Left colon (tissue), 2 donors: ENCODE measurements at regions of chr2 and their contacts with region 1.

Region 1: DNA sequence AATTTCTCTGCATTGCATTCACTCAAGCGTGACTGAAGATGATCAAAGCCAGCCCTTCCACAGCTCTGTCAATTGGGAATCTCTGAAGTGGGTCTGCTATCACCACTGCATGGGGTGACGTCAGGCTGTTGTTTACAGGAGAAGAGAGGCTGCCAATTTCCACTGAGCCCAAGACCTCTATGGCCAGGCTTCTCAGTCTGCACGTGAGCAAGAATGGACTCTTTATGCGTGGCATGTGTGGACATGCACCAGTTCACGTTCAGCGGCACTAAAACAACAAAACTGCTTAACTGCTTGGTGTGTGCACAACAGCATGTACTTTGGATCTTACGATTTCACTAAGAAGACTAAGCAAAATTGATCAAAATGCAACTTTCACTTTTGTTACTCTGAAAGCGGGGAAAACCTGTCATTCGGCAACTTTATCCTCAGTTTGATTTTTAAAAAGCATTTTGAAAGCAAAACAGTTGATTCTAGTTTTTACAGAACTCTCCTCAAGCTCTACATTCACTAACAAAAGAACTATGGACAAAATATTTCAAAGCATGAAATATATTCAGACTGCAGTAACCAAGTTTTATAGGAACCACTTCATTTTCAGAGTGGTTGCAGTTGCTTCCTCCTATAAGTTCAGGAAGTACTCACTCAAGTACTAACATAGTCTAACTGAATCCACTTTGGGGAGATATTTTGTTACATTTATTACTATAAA is 77.0 kb upstream of the SERTAD2 start:
- DNase-seq: peak; percentile 66 to 76
- ATAC-seq: peak; percentile 69

Region 2: GRCh38 chr2:63780483-63781155 is 950.1 kb before region 1 on chr2:
- intact Hi-C with region 1: no loop called
- DNase-seq: no peak
- ATAC-seq: no peak

Region 3: DNA sequence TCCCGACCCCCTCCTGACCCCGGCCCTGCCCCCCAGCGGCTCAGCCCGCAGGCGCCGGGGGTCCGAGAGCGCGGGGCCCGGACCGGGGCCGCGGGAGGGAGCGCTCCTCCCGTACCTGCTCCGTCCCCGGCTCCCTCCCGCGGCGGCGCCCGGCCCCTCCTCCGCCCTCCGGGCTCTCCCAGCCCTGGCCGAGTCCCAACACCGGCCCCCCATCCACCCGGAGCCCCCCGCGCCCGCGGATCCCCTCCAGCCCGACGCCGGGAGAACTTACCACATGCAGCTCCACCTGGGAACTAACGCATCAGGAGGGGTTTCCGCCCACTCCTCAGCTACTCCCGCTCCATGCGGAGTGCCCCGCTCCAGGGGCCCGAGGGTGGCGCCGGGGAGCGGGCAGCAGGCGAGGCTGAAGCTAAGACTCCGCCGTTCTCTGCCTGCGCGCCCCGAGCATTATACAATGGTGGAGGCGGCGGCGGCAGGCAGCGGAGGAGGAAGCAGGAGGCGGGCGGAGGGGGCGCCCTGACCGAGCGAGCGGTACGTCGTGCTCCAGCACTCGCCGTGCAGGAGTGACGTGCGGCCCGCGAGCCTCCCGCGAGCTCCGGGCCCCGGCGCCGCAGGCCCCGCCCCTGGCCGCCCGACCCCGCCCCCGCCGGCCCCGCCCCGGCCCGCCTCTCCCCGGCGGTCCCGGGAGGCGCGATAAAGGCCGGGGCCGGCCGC is 77.2 kb before region 1 on chr2 and contains the start of gene SERTAD2:
- intact Hi-C with region 1: loop called in 1 of 2 experiments (anchors 10 kb)
- DNase-seq: peak; percentile 89 to 92
- ATAC-seq: peak; percentile 77
- total RNA-seq, gene SERTAD2: 16.0 to 20.5 TPM

Region 4: GRCh38 chr2:64865073-64865830 is 134.5 kb after region 1 on chr2:
- intact Hi-C with region 1: no loop called
- DNase-seq: peak; percentile 52 to 74
- ATAC-seq: peak; percentile 80